Activated CD4-positive, alpha-beta memory T cell treated with anti-CD3 and anti-CD28 coated beads, Interleukin-2, amount 10 ng/mL, durations not matched to agents 7 days and 5 days (primary cell): ENCODE measurements at regions of chr9 and their contacts with region 1.

Region 1: DNA sequence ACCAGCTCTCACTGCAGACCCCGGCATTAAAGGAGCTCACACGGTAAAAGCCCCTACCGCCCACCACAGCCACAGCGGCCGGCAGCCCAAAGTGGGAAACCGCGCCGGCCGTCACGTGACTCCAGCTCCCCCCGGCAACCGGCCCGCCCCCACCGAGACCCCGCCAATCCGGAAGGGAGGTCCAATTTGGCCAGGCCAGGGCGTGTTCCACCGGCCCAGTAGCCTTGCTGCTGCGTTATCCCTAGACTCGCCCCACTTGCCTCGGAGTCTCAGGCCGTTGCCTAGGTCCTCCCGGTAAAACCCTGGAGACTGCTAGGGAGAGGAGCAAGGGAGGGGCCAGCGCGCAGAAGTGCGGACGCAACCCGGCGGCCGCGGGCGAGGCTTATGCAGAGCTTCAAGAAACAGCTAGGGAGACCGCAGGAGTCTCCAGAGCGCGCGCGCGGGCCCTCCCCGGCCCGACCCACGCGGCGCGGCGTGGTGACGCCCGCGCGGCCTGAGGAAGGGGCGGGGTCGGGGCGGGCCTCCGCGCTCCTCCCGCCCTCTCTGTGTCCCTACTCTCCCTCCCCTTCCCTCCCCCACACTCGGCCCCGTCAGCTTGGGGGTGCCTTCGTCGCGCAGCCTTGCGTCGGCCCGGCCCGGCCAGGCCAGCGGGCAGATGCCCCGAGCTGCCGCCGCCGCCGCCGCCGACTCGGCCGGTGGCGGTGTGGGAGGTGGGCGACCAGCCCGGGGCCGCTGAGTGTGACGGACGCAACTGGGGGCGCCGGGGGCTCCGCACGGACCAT is at the start of gene RIC1:
- DNase-seq: peak; percentile 93
- H3K4me3 Mint-ChIP-seq: peak within 1 kb of the TSS; percentile 99
- H3K27ac Mint-ChIP-seq: peak within 1 kb of the TSS; percentile 100
- H3K4me1 Mint-ChIP-seq: peaks cover 57% of the 10 kb centered on the region
- H3K27me3 Mint-ChIP-seq: no peaks in the 10 kb centered on the region
- total RNA-seq, gene RIC1: 20.7 to 21.5 TPM

Region 2: GRCh38 chr9:5510360-5510931 is 118.3 kb before region 1 on chr9 and contains the start of gene PDCD1LG2:
- CTCF ChIA-PET with region 1: no interaction called
- POLR2A ChIA-PET with region 1: interaction called, 17 read pairs
- DNase-seq: peak; percentile 59
- H3K4me3 Mint-ChIP-seq: peak within 1 kb of the TSS; percentile 80
- H3K27ac Mint-ChIP-seq: peak within 1 kb of the TSS; percentile 95
- H3K4me1 Mint-ChIP-seq: peaks cover 60% of the 10 kb centered on the region
- H3K27me3 Mint-ChIP-seq: no peaks in the 10 kb centered on the region
- total RNA-seq, gene PDCD1LG2: 4.1 to 4.8 TPM

Region 3: DNA sequence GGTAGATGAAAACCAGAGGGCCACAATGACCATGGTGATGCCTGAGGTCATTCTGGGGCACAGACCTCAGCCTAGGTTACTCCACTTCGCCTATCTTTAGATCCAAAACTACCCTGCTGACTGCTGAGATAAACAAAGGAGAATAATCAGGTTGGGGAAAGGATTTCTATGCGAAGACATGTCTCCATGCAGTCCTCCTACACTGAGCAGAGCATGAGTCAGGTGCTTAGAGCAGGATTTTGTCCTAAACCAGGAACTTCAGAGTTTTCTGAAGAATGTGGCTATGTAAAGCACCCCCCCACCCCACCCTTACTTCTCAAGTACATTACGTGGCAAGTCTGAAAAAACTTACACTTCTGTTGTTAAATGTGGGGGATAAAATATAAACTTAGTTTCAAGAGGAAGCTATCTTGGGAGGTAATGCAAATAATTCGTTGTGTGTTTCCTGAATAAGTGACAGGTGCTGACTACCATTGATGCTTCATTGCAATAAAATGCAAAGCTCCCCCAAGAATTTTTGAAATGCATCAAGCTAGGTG is 99.0 kb before region 1 on chr9:
- CTCF ChIA-PET with region 1: no interaction called
- POLR2A ChIA-PET with region 1: no interaction called
- DNase-seq: no peak
- H3K4me3 Mint-ChIP-seq: no peak overlapping the region
- H3K27ac Mint-ChIP-seq: no peak overlapping the region
- H3K4me1 Mint-ChIP-seq: peaks cover 21% of the 10 kb centered on the region
- H3K27me3 Mint-ChIP-seq: no peaks in the 10 kb centered on the region

Region 4: GRCh38 chr9:5608298-5609225 is 20.2 kb before region 1 on chr9:
- CTCF ChIA-PET with region 1: no interaction called
- POLR2A ChIA-PET with region 1: interaction called, 13 read pairs
- DNase-seq: no peak
- H3K4me3 Mint-ChIP-seq: no peak overlapping the region
- H3K27ac Mint-ChIP-seq: no peak overlapping the region
- H3K4me1 Mint-ChIP-seq: peaks cover 17% of the 10 kb centered on the region
- H3K27me3 Mint-ChIP-seq: no peaks in the 10 kb centered on the region

Region 5: DNA sequence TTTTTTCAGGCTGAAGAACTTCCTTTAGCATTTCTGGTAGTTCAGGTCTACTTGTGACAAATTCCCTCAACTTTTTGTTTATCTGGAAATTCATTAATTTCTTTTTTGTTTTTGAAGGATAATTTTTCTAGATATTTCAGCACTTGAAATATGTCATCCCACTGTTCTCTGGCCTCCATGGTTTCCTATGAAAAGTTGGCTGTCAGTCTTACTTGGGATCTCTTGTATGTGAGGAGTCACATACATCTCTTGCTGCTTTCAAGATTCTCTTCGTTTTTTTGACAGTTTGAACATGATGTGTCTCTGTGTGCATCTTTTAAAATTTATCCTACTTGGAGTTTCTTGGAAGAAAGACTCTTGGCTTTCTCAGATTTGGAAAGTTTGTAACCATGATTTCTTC is 79.7 kb after region 1 on chr9:
- CTCF ChIA-PET with region 1: no interaction called
- POLR2A ChIA-PET with region 1: no interaction called
- DNase-seq: no peak
- H3K4me3 Mint-ChIP-seq: no peak overlapping the region
- H3K27ac Mint-ChIP-seq: no peak overlapping the region
- H3K4me1 Mint-ChIP-seq: peaks cover 3% of the 10 kb centered on the region
- H3K27me3 Mint-ChIP-seq: no peaks in the 10 kb centered on the region

Region 6: DNA sequence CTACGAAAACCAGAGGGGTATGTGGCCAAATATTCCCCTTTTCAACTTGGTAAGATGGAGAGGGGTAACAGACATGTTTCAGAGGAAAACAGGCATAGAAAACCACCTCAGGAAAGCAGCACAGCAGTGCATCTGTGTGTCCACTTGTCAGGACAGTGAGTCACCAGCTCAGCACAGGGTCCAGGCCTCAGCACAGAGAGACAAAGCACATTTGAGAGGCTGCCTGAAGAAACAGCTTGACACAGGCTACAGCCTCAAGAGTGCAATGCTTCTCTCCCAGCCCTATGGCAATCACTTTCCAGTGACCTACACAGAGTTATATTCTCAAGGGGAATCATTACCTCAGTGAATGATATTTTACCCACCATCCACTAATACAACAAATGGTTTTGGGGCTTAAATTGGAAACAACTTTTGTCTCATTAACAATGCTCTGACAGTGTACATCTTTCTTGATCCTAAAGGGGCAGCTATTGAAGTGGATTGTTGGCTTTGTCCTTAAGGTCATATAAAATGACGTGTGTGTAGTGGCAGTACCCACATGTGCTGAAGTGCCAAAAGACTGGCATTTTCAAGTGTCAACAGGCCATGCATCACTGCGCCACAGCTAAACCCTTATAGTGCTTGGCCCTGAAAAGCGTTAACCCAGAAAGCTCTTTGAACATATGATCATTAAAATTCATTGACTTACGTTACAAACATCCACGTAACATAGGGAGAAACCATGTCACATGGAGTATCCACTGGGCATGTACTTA is 157.8 kb after region 1 on chr9:
- CTCF ChIA-PET with region 1: no interaction called
- POLR2A ChIA-PET with region 1: no interaction called
- DNase-seq: no peak
- H3K4me3 Mint-ChIP-seq: no peak overlapping the region
- H3K27ac Mint-ChIP-seq: no peak overlapping the region
- H3K4me1 Mint-ChIP-seq: peaks cover 5% of the 10 kb centered on the region
- H3K27me3 Mint-ChIP-seq: no peaks in the 10 kb centered on the region

Region 7: DNA sequence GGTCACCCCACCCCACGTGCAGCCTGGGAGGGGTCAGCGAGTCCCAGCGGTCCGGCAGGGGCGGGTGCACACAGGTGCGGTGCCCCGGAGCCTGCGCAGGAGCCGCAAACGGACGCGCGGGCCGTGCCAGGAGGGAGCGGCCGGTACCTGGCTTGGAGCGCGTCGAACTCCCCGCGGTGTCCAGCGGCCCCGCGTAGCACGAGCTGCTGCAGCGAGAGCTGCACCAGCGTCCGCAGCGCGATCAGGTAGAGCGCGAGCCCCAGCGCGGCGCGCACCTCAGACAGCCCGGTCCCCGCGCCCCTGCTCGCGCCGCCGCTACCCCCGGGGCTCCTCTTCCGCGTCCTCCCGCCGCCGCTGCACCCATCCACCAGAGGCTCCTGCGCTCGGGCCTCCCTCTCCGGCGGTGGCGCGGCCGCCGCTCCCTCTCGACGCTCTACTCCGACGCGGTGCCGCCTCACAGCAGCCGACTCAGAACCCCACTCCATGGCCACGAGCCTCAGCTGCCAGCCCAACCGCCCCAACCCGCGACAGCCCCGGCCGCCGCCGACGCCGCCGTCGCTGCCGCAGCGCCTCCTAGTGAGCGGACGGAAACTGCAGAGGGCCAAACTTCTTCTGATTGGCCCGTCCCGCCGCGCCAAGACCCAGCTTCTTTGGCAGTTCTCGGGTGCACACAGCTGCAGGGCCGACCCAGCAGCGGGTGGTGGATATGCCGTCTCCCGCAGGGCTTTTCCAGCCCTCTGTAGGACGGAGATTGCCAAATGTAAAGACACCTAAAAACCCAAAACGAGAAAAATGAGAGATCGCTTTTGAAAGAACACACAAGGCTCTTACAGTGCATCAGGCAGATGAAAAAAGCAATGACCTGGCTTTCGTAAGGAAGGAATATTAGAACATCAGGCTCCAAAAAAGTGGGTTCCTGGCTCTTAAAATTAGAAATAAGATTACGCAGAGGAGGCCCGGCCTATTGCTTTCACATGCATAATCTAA is 204.1 kb after region 1 on chr9 and contains the start of gene ERMP1:
- CTCF ChIA-PET with region 1: interaction called, 6 read pairs
- POLR2A ChIA-PET with region 1: interaction called, 21 read pairs
- DNase-seq: peak; percentile 91
- H3K4me3 Mint-ChIP-seq: peak within 1 kb of the TSS; percentile 85
- H3K27ac Mint-ChIP-seq: peak within 1 kb of the TSS; percentile 84
- H3K4me1 Mint-ChIP-seq: peaks cover 54% of the 10 kb centered on the region
- H3K27me3 Mint-ChIP-seq: no peaks in the 10 kb centered on the region
- total RNA-seq, gene ERMP1: 35.1 to 39.1 TPM

Region 8: GRCh38 chr9:5843794-5844504 is 215.2 kb after region 1 on chr9:
- CTCF ChIA-PET with region 1: interaction called, 7 read pairs
- POLR2A ChIA-PET with region 1: interaction called, 14 read pairs
- DNase-seq: no peak
- H3K4me3 Mint-ChIP-seq: peak overlapping the region; percentile 60
- H3K27ac Mint-ChIP-seq: peak overlapping the region; percentile 97
- H3K4me1 Mint-ChIP-seq: peaks cover 86% of the 10 kb centered on the region
- H3K27me3 Mint-ChIP-seq: no peaks in the 10 kb centered on the region

Region 9: GRCh38 chr9:5851445-5851844 is 222.7 kb after region 1 on chr9:
- CTCF ChIA-PET with region 1: interaction called, 4 read pairs
- POLR2A ChIA-PET with region 1: interaction called, 10 read pairs
- DNase-seq: peak; percentile 67
- H3K4me3 Mint-ChIP-seq: peak overlapping the region; percentile 14
- H3K27ac Mint-ChIP-seq: peak overlapping the region; percentile 76
- H3K4me1 Mint-ChIP-seq: peaks cover 66% of the 10 kb centered on the region
- H3K27me3 Mint-ChIP-seq: no peaks in the 10 kb centered on the region

Region 10: GRCh38 chr9:6008169-6008979 is 379.7 kb after region 1 on chr9:
- CTCF ChIA-PET with region 1: no interaction called
- POLR2A ChIA-PET with region 1: interaction called, 18 read pairs
- DNase-seq: peak; percentile 95
- H3K4me3 Mint-ChIP-seq: peak overlapping the region; percentile 74
- H3K27ac Mint-ChIP-seq: peak overlapping the region; percentile 78
- H3K4me1 Mint-ChIP-seq: peaks cover 73% of the 10 kb centered on the region
- H3K27me3 Mint-ChIP-seq: no peaks in the 10 kb centered on the region